Activated CD4-positive, alpha-beta memory T cell treated with anti-CD3 and anti-CD28 coated beads, Interleukin-2, amount 10 ng/mL, durations not matched to agents 7 days and 5 days (primary cell): ENCODE measurements at regions of chr10 and their contacts with region 1.

Region 1: GRCh38 chr10:69515699-69516259 is 57.4 kb downstream of the NEUROG3 start:
- DNase-seq: peak; percentile 82
- H3K4me3 Mint-ChIP-seq: no peak overlapping the region
- H3K27ac Mint-ChIP-seq: no peak overlapping the region
- H3K4me1 Mint-ChIP-seq: no peaks in the 10 kb centered on the region
- H3K27me3 Mint-ChIP-seq: peaks cover 31% of the 10 kb centered on the region

Region 2: GRCh38 chr10:68690805-68691204 is 825.0 kb before region 1 on chr10:
- CTCF ChIA-PET with region 1: no interaction called
- POLR2A ChIA-PET with region 1: no interaction called
- DNase-seq: no peak
- H3K4me3 Mint-ChIP-seq: no peak overlapping the region
- H3K27ac Mint-ChIP-seq: no peak overlapping the region
- H3K4me1 Mint-ChIP-seq: no peaks in the 10 kb centered on the region
- H3K27me3 Mint-ChIP-seq: no peaks in the 10 kb centered on the region

Region 3: DNA sequence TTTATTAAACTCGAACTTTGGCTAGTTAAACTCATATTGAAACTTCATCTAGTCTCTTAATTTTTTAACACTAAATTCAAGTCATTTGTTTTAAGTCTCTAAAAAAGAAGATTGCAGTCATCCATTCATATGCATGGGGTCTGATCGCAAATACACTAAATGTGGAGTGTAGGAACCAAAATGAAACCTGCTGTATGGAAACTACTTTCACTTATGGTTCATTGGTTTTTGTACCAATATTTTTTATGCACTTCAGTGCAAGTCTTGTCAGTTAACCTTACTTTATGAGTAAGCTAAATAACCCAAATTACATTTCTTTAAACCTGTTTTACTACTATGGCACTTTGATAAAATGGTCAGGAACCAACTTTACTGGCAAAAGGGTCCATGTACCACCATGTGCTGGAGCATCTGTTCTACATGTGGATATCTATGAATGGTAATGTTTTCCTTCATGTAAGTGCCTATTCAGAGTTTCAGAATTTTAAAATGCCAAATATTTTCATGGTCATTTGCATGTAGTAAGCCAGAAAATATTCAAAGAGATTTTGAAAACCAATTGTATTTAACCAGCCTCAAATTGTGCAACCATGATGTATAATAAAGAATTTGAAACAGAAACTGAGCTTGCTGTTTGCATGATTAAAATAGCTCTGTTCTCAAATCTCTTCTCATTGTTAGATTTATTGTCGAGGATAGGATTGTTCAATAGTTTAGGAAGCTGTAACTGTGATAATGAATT is 343.4 kb before region 1 on chr10:
- CTCF ChIA-PET with region 1: no interaction called
- POLR2A ChIA-PET with region 1: no interaction called
- DNase-seq: no peak
- H3K4me3 Mint-ChIP-seq: no peak overlapping the region
- H3K27ac Mint-ChIP-seq: no peak overlapping the region
- H3K4me1 Mint-ChIP-seq: peaks cover 7% of the 10 kb centered on the region
- H3K27me3 Mint-ChIP-seq: no peaks in the 10 kb centered on the region

Region 4: DNA sequence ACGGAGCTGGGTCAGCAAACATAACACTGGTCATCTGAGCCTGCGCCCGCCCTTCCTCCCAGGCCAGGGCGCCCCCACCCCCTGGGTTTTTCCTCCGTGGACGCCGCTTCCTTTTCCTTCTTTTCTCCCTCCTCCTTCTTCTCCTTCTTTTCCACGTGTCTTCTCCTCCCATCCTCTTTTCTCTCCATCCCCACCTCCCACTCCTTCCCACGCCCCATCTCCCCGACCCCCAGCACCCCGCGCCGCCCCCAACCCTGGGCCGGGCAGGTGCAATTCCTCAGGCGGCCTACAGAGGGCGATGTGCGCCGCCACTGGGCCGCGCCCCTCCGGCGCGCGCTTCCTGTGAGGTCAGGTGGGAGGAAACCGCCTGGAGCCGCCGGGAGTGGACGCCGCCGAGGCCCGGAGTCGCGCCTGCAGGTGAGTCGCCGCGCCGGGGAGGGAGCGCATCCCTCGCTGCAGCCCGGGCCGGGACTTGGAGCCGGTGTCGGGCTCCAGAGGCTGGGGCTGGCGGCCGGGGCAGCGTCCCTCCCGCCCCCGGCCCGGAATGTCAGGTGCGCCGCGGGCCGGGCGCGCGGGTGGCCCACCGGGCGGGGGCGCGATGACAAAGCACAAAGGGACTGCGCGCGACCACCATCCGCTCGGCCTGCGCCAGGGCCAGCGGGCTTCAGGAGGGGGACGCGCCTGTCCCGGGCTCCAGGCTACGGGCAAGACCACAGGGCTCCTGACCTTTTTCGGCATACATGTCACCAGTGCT is 114.3 kb after region 1 on chr10 and contains the start of gene FAM241B:
- CTCF ChIA-PET with region 1: interaction called, 182 read pairs
- POLR2A ChIA-PET with region 1: interaction called, 4 read pairs
- DNase-seq: peak; percentile 84
- H3K4me3 Mint-ChIP-seq: peak within 1 kb of the TSS; percentile 42
- H3K27ac Mint-ChIP-seq: peak within 1 kb of the TSS; percentile 1
- H3K4me1 Mint-ChIP-seq: peaks cover 2% of the 10 kb centered on the region
- H3K27me3 Mint-ChIP-seq: no peaks in the 10 kb centered on the region
- total RNA-seq, gene FAM241B: 2.7 to 3.2 TPM

Region 5: DNA sequence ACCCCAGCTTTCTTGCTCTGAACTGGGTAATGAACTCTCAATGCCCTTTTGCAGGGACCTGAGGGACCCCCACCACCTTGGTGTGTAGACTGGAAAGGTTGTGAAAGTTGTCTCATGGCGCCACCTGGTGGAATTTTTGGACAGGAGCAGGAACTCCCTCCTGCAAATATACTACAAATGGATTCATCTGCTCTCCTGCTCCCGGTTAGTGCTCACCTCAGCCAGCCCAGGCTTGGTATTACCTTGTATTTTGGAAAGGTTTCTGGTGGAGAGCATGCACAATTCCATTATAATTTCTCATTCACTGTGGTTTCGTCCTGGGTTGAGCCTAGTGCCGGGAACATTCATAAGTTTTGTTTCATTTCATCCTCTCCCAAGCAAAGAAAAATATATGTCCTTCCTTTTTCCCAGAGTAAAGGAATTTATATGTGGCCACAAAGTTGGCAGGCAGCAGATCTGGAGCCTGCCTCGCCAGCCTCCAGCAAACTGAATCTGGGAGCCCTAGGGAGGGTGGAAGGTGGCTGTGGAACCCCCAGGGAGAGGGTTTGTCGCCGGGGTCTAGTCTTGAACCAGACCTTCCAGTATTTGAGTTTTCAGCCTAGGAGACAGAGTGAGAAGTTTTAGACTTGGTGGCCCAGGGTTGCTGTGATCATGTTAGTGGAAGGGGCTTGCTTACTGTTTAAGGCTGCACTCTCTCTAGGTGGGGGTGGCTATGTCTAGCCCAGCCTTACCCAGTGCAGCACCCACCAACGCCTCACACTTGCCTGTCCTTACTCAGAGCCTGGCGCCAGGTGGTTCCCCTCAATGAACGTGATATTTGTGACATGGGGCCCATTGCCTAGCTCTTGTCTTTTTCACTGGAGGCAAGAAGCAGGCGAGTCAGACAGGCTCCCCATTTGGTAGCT is 123.8 kb after region 1 on chr10:
- CTCF ChIA-PET with region 1: interaction called, 182 read pairs
- POLR2A ChIA-PET with region 1: interaction called, 6 read pairs
- DNase-seq: peak; percentile 70
- H3K4me3 Mint-ChIP-seq: no peak overlapping the region
- H3K27ac Mint-ChIP-seq: no peak overlapping the region
- H3K4me1 Mint-ChIP-seq: no peaks in the 10 kb centered on the region
- H3K27me3 Mint-ChIP-seq: no peaks in the 10 kb centered on the region

Region 6: GRCh38 chr10:69716711-69717560 is 201.2 kb after region 1 on chr10:
- CTCF ChIA-PET with region 1: interaction called, 12 read pairs
- POLR2A ChIA-PET with region 1: no interaction called
- DNase-seq: peak; percentile 65
- H3K4me3 Mint-ChIP-seq: no peak overlapping the region
- H3K27ac Mint-ChIP-seq: no peak overlapping the region
- H3K4me1 Mint-ChIP-seq: no peaks in the 10 kb centered on the region
- H3K27me3 Mint-ChIP-seq: peaks cover 12% of the 10 kb centered on the region